HepG2 (cell line): ENCODE measurements at regions of chr20 and their contacts with region 1.

Region 1: GRCh38 chr20:17676942-17677341 is 5.1 kb downstream of the RRBP1 start:
- DNase-seq: peak; percentile 55
- ATAC-seq: no peak
- H3K4me3 ChIP-seq: no peak overlapping the region
- H3K27ac ChIP-seq: no peak overlapping the region
- H3K4me1 ChIP-seq: peaks cover 79% of the 10 kb centered on the region
- H3K27me3 ChIP-seq: no peaks in the 10 kb centered on the region; a peak in 1 of 5 replicates
- CTCF ChIP-seq: no peak
- EP300 ChIP-seq: no peak
- POLR2A ChIP-seq: no peak; a peak in 1 of 4 replicates
- RAD21 ChIP-seq: no peak

Region 2: DNA sequence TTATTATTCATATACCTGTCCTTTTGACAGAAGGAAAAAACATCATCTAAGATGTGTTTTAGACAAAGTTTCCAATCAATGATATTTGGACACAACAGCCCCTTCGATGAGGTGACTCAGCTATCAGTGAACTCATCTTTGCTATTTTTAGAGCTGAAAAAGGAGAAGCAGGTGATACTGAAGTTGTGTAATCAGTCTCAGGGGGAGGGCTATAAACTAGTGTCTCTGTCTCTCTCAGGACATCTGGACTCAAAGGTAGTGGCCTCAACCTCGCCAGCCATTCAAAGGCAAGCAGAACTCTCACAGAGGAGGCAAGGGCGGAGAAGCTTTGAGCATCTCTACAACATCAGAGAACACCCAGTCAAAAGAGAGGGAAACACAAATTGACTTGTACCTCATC is 281.2 kb before region 1 on chr20:
- CTCF ChIA-PET with region 1: no interaction called
- POLR2A ChIA-PET with region 1: no interaction called
- in situ Hi-C with region 1: no loop called
- intact Hi-C with region 1: no loop called
- DNase-seq: no peak
- ATAC-seq: no peak
- H3K4me3 ChIP-seq: no peak overlapping the region
- H3K27ac ChIP-seq: no peak overlapping the region
- H3K4me1 ChIP-seq: no peaks in the 10 kb centered on the region
- H3K27me3 ChIP-seq: no peaks in the 10 kb centered on the region; a peak in 1 of 5 replicates
- CTCF ChIP-seq: no peak
- EP300 ChIP-seq: no peak
- POLR2A ChIP-seq: no peak
- RAD21 ChIP-seq: no peak

Region 3: GRCh38 chr20:17666481-17666880 is 10.5 kb before region 1 on chr20:
- CTCF ChIA-PET with region 1: no interaction called
- POLR2A ChIA-PET with region 1: interaction called, 18 read pairs
- in situ Hi-C with region 1: no loop called
- intact Hi-C with region 1: no loop called
- DNase-seq: no peak
- ATAC-seq: no peak
- H3K4me3 ChIP-seq: no peak overlapping the region
- H3K27ac ChIP-seq: no peak overlapping the region
- H3K4me1 ChIP-seq: peaks cover 59% of the 10 kb centered on the region
- H3K27me3 ChIP-seq: no peaks in the 10 kb centered on the region
- CTCF ChIP-seq: no peak
- EP300 ChIP-seq: no peak
- POLR2A ChIP-seq: no peak
- RAD21 ChIP-seq: no peak